ENCODE measurements at regions of chr14 and their contacts with region 1.

Region 1: GRCh38 chr14:75295491-75296345 is 17.1 kb downstream of the FOS start:
- DNase-seq: peak; percentile 88
- H3K4me3 ChIP-seq: peak overlapping the region; percentile 62
- H3K27ac ChIP-seq: peak overlapping the region; percentile 94
- H3K4me1 ChIP-seq: peaks cover 45% of the 10 kb centered on the region
- H3K27me3 ChIP-seq: no peaks in the 10 kb centered on the region
- CTCF ChIP-seq: peak; percentile 99

Region 2: DNA sequence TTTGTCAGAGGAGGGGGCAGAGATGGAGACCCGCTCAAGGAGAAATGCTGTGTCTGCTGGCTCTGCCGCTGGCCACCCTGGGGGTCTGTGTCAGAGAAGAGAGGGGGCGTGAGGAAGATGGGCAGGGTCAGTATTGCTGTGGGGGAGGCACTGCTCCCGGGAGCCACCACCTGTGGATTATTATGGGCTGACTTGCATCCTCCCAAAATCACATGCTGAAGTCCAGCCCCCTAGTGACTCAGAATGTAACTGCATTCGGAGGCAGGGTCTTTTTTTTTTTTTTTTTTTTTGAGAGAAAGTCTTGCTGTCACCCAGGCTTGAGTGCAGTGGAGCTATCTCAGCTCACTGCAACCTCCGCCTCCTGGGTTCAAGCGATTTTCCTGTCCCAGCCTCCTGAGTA is 1005.3 kb before region 1 on chr14:
- CTCF ChIA-PET with region 1: interaction called, 16 read pairs
- POLR2A ChIA-PET with region 1: no interaction called
- intact Hi-C with region 1: no loop called
- DNase-seq: peak; percentile 60
- H3K4me3 ChIP-seq: no peak overlapping the region
- H3K27ac ChIP-seq: no peak overlapping the region
- H3K4me1 ChIP-seq: no peaks in the 10 kb centered on the region
- H3K27me3 ChIP-seq: no peaks in the 10 kb centered on the region
- CTCF ChIP-seq: peak; percentile 63

Region 3: GRCh38 chr14:74945823-74946682 is 349.7 kb before region 1 on chr14:
- CTCF ChIA-PET with region 1: interaction called, 7 read pairs
- POLR2A ChIA-PET with region 1: no interaction called
- intact Hi-C with region 1: loop called (anchors 5 kb)
- DNase-seq: peak; percentile 83
- H3K4me3 ChIP-seq: no peak overlapping the region
- H3K27ac ChIP-seq: no peak overlapping the region
- H3K4me1 ChIP-seq: peaks cover 12% of the 10 kb centered on the region
- H3K27me3 ChIP-seq: no peaks in the 10 kb centered on the region
- CTCF ChIP-seq: peak; percentile 97

Region 4: GRCh38 chr14:75132382-75133086 is 163.2 kb before region 1 on chr14:
- CTCF ChIA-PET with region 1: interaction called, 3 read pairs
- POLR2A ChIA-PET with region 1: no interaction called
- intact Hi-C with region 1: loop called (anchors 1 kb)
- DNase-seq: peak; percentile 88
- H3K4me3 ChIP-seq: no peak overlapping the region
- H3K27ac ChIP-seq: peak overlapping the region; percentile 12
- H3K4me1 ChIP-seq: peaks cover 21% of the 10 kb centered on the region
- H3K27me3 ChIP-seq: no peaks in the 10 kb centered on the region
- CTCF ChIP-seq: peak; percentile 78

Region 5: DNA sequence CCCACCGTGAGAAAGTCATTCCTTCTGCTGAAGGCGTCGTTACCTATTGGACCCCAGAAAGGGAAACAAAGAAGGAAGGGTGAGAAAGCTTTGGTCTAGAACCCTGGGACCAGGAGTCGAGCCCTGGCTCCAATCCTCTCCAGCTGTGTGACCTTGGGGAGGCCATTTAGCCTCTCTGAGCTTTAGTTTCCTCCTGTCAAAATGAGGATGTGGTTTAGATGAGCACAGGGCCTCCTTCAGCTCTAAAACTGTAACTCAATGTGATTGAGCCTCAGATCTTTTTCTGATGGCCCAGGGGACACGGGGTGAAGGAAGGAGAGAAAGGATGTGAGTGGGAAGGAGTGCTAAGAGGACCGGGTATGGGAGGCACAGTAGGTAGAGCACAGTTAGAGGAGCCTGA is 139.8 kb after region 1 on chr14:
- CTCF ChIA-PET with region 1: interaction called, 15 read pairs
- POLR2A ChIA-PET with region 1: no interaction called
- intact Hi-C with region 1: no loop called
- DNase-seq: no peak
- H3K4me3 ChIP-seq: no peak overlapping the region
- H3K27ac ChIP-seq: no peak overlapping the region
- H3K4me1 ChIP-seq: peaks cover 6% of the 10 kb centered on the region
- H3K27me3 ChIP-seq: no peaks in the 10 kb centered on the region
- CTCF ChIP-seq: no peak

Measured in A673 (cell line).